Left colon (tissue), 2 donors: ENCODE measurements at regions of chr7 and their contacts with region 1.

Region 1: DNA sequence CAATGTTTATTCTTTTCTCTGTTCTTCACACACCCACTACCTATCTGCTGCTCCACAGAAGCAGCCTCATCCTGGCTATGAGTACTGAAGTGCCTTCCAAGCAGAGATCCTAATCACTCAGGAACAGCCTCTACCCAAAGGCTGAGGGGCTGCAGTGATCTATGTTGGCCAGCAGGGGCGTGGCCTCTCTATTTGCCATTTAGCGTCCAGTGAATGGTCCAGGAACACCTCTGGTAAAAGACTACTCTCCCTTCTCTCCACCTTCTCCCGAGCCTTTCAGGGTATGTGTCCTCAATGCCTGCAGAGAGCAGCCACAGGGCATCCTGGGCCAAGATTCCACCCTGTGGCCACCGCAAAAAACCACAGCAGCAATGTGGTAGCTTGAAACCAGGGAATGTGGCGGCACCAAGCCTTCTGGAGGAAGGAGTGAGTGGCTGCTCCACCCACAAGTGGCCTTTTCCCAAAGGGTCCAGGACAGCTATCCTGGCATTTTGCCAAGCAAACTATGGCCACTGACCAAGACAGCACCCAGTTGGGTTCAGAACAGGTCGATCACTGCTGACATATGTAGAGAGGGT is 70.9 kb downstream of the SYPL1 start:
- DNase-seq: peak in 1 of 2 donors; percentile 44
- ATAC-seq: peak; percentile 56

Region 2: DNA sequence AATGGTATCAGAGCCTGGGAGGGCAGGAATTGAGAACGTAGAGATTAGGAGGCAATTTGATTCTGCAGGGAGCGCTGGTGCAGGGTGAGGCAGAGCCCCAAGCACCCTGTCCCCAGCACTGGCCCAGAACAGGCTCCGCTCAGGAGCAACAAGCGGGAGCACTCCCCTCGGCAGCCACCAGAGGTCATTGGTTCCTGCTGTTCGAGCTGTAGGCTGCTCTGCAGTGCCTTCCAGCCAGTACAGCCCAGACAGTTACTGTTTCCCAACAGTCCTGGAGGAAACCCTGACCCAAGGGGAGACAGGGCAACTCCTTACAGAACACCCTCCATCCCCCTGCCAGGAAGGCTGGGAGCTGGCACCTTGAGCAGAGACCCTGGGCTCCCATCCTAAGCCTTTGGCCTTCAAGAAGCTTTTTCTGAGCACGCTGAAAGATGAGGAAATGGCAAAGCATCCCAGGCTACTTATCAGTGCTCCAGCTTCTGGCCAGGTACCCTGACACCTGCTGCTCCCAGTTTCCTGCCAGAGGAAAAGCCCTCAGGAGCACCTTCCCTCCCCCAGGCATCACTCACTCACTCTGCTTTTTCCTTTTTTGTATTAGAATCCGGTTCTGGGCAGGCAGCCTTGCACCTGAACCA is 388.8 kb before region 1 on chr7:
- intact Hi-C with region 1: loop called in 1 of 2 experiments (anchors 5 kb)
- DNase-seq: peak; percentile 65 to 85
- ATAC-seq: peak; percentile 86

Region 3: DNA sequence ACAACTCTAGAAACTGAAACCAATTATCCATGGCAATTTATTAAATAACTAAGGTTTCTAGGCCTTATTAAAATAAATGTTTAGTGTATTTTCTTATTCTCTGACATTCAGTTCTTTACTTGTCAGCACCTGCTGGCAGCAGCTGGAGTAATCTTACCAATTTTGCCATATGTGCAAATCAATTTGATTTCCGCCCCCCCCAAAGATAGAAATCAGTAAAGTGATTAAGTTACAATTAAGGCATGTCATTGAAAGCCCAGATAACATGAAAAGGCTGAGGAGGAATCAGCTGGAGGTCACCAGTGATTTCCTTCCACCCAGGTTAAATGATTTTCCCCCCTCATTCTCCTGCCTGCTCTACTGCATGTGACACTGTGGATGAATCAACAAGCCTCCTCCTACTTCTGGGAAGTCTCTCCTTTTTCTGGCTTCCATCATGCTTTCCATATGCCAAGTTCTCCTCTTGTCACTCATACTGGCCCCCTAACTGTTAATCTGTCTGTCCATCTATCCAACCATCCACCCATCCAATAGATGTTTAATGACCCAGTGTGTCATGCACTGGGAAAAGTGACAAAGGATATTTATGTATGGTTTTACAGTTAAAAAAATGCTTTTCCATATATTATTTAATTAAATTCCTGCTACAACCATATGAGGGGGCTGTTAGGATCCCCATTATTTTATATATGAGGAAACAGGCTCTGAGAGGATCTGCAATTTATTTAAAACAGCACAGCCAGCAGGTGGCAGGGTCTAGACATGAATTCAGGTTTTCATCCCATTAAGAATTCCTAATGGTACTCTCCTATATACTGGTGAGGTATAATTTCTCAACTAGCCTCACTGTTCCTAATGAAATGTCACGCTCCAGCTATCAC is 281.3 kb before region 1 on chr7:
- intact Hi-C with region 1: loop called (anchors 5 to 10 kb)
- DNase-seq: peak in 1 of 2 donors; percentile 69
- ATAC-seq: peak; percentile 57

Region 4: GRCh38 chr7:106367018-106367420 is 325.8 kb after region 1 on chr7:
- intact Hi-C with region 1: no loop called
- DNase-seq: peak in 1 of 2 donors; percentile 19
- ATAC-seq: peak; percentile 56